ENCODE measurements at regions of chr19 and their contacts with region 1.

Region 1: DNA sequence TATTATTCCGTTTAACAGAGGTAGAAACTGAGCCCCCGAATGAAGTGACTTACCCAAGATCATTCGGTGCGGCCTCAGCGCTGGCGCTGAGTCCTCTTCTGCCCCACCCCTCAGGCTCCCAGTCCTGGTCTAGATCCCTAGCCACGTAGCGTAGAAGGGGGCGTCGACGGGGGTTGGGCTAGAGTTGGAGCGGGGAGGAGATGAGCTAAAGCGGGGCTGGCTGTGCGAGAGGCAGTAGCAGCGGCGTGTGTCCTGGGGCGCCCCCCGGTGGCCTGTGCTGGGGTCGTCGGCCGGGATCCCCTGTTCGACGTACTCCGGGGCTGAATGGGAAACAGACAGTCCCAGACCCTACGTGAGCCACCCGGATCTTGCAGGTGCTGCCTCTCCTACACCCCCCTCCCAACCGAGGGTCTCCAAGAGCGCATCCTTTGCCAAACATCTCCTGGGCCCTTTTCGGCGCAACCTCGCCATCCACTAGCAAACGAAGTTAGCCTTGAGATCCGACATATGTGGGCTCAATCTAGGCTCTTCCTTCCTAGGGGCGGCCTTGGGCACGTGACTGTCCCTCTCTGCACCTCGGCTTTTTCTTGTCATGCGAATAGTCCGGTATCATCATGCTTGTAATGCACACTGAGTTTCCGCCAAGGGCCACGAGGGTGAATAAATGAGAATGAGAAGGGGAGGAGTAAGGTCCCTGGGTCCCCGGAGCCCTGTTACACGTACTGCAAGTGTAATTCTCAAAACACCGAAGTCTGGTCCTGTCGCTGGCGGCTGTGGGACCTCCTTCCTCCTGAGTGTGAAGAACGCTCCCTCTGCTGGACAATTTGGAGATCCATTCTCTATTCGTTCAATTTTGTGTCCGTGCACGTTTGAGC is 47.7 kb downstream of the CYP4F22 start:
- DNase-seq: peak; percentile 54 to 86 (median 78)
- H3K4me3 ChIP-seq: peak overlapping the region in 55 of 59 donors; percentile 0 to 58 (median 39)
- H3K27ac ChIP-seq: no peak overlapping the region
- H3K27me3 ChIP-seq: peaks cover 0 to 55% (median 7%) of the 10 kb centered on the region in 45 donors
- CTCF ChIP-seq: peak; percentile 70 to 93 (median 81)

Region 2: GRCh38 chr19:15091901-15092753 is 463.9 kb before region 1 on chr19:
- intact Hi-C with region 1: loop called (anchors 2 to 5 kb)
- DNase-seq: no peak
- H3K4me3 ChIP-seq: peak overlapping the region in 2 of 59 donors; percentile 5 to 33
- H3K27ac ChIP-seq: no peak overlapping the region
- H3K27me3 ChIP-seq: peaks cover 0 to 13% (median 0%) of the 10 kb centered on the region in 45 donors
- CTCF ChIP-seq: peak; percentile 53 to 89 (median 77)

Region 3: GRCh38 chr19:15177269-15178116 is 378.5 kb before region 1 on chr19:
- intact Hi-C with region 1: loop called (anchors 1 kb)
- DNase-seq: peak; percentile 61 to 88 (median 74)
- H3K4me3 ChIP-seq: peak overlapping the region in 50 of 59 donors; percentile 14 to 61 (median 40)
- H3K27ac ChIP-seq: no peak overlapping the region
- H3K27me3 ChIP-seq: no peaks in the 10 kb centered on the region
- CTCF ChIP-seq: peak; percentile 67 to 99 (median 96)

Region 4: DNA sequence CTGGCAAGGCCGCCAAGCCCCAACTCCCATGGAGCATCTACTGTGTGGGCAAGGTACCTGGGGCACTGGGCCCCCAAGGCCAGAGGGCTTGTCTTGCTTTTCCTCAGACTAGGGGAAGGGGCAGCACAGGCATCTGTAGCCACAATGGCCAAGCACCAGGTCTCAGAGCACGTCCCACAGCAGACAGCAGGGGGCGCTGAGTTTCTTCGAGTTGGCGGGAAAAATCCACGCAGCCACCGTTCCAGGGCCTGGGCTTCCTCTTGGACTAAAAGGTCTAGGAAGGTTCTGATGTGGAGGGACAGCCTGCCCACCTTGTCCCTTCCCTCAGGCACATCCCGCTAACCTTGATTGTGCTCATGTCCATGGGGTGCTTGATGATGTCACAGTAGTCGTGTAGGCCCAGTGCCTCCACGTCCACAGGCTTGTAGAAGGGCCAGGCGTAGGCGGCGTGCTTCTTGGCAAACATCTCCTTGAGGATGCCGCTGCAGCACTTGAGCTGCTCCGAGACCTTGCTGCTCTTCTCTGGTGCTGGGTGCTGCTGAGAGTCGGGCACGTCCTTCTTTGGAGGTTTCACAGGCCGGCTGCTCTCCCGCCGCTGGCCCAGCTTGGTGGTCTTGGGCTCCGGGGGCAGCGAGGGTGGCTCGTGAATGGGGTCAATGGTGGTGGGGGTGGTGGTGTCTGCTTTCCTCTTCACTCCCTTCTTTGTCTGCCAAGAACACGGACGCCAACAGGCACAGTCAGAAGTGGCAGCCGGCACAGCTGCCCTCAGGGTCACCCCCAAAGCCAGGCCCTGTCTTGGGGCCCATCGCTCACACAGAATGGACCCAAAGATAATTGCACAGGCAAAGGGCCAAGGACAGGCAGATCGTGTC is 291.7 kb before region 1 on chr19:
- intact Hi-C with region 1: loop called (anchors 2 to 5 kb)
- DNase-seq: peak; percentile 69 to 81 (median 78)
- H3K4me3 ChIP-seq: peak overlapping the region in 11 of 59 donors; percentile 1 to 25 (median 10)
- H3K27ac ChIP-seq: peak overlapping the region in 54 of 59 donors; percentile 3 to 91 (median 75)
- H3K27me3 ChIP-seq: no peaks in the 10 kb centered on the region
- CTCF ChIP-seq: peak; percentile 65 to 95 (median 86)

Region 5: GRCh38 chr19:15379083-15379995 is 176.7 kb before region 1 on chr19 and contains the start of gene AKAP8:
- intact Hi-C with region 1: loop called in 1 of 2 experiments (anchors 10 kb)
- DNase-seq: peak; percentile 96 to 99 (median 98)
- H3K4me3 ChIP-seq: peak within 1 kb of the TSS; percentile 52 to 100 (median 96)
- H3K27ac ChIP-seq: peak within 1 kb of the TSS; percentile 71 to 99 (median 96)
- H3K27me3 ChIP-seq: no peaks in the 10 kb centered on the region
- CTCF ChIP-seq: peak in 7 of 56 donors; percentile 8 to 50 (median 28)
- total RNA-seq, gene AKAP8: 18.6 to 51.6 (median 29.6) TPM

Region 6: GRCh38 chr19:15418588-15419412 is 137.2 kb before region 1 on chr19 and contains the start of gene AKAP8L:
- intact Hi-C with region 1: loop called in 1 of 2 experiments (anchors 10 kb)
- DNase-seq: peak; percentile 91 to 99 (median 98)
- H3K4me3 ChIP-seq: peak within 1 kb of the TSS; percentile 73 to 100 (median 98)
- H3K27ac ChIP-seq: peak within 1 kb of the TSS; percentile 0 to 97 (median 89)
- H3K27me3 ChIP-seq: no peaks in the 10 kb centered on the region
- CTCF ChIP-seq: peak in 53 of 56 donors; percentile 29 to 69 (median 52)
- total RNA-seq, gene AKAP8L: 104 to 260 (median 142) TPM

Region 7: DNA sequence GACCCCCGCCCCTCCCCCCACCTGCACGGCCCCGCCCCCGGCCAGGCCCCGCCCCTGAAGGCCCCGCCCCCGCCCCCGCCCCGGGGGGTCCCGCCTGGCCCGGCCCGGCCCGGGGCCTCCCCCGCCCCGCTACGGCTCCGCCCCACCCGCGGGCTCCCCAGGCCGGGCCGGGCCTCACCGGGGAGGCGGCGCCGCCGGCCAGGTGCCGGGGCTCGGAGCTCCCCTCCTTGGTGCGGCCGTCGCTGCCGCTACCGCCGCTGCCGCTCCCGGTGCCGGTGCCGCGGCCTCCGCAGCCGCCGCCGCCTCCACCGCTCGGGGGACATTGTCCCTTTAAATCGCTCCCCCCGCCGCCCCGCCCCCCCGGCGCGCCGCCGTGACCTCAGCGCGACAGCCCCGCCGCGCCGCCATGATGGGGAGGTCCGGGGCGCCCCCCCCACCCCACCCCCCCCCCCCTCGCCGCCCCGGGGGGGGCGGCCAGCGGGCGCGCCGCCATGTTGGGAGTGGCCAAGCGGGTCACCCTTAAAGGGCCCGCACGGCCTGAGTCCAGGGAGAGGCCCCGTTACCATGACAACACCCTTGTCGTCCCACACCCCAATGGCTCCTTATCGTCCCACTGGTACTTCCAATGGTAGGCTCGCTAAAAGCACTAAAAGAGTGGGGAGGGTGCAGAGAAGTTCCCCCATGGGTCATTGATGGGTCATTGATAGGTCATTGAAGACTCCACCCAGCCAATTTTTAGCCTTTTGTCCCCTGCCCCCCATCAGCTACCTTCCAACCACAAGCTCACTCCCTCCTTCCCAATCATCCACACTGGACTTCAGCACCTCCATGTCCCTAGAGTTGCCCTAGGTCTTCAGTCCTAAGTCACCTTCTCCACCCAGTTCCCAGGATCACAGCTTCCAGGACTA is 106.1 kb before region 1 on chr19 and contains the start of gene WIZ:
- intact Hi-C with region 1: loop called in 1 of 2 experiments (anchors 10 kb)
- DNase-seq: peak in 9 of 10 donors; percentile 59 to 87 (median 72)
- H3K4me3 ChIP-seq: peak within 1 kb of the TSS; percentile 47 to 89 (median 74)
- H3K27ac ChIP-seq: peak within 1 kb of the TSS in 28 of 59 donors; percentile 10 to 79 (median 54)
- H3K27me3 ChIP-seq: peaks cover 0 to 29% (median 14%) of the 10 kb centered on the region in 45 donors
- CTCF ChIP-seq: no peak
- total RNA-seq, gene WIZ: 26.2 to 74.6 (median 41.4) TPM

Region 8: GRCh38 chr19:15532779-15533521 is 23.0 kb before region 1 on chr19:
- intact Hi-C with region 1: no loop called
- DNase-seq: no peak
- H3K4me3 ChIP-seq: no peak overlapping the region
- H3K27ac ChIP-seq: no peak overlapping the region
- H3K27me3 ChIP-seq: peaks cover 0 to 47% (median 6%) of the 10 kb centered on the region in 45 donors
- CTCF ChIP-seq: no peak

Region 9: DNA sequence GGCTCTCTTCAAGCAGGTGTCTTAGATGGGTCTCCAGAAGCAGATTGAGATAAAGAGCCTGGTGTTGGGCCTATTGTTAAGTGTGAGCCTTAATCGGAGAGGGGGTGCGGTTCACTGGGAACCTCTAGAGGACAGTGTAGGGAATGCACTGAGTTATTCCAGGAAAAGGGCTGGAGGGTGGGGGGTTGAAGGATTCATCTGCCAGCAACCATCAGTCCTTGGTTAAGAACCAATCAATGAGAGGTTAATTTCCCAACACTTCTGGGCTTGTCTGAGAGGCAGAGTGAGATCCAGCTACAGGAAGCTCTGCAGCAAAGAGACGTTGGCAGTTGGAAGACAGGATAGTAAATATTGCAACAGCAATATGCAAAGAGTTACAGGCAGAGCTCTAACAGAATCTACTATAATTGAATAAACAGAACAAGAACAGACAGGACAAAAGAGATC is 313.1 kb after region 1 on chr19:
- intact Hi-C with region 1: no loop called
- DNase-seq: peak in 5 of 10 donors; percentile 4 to 39 (median 23)
- H3K4me3 ChIP-seq: no peak overlapping the region
- H3K27ac ChIP-seq: no peak overlapping the region
- H3K27me3 ChIP-seq: peaks cover 0 to 33% (median 10%) of the 10 kb centered on the region in 45 donors
- CTCF ChIP-seq: peak in 54 of 56 donors; percentile 19 to 75 (median 56)